Posterior cingulate gyrus (tissue), 11 donors: ENCODE measurements at regions of chr1 and their contacts with region 1.

Region 1: GRCh38 chr1:92886886-92887419 is 55.1 kb downstream of the RPL5 start:
- DNase-seq: no peak

Region 2: DNA sequence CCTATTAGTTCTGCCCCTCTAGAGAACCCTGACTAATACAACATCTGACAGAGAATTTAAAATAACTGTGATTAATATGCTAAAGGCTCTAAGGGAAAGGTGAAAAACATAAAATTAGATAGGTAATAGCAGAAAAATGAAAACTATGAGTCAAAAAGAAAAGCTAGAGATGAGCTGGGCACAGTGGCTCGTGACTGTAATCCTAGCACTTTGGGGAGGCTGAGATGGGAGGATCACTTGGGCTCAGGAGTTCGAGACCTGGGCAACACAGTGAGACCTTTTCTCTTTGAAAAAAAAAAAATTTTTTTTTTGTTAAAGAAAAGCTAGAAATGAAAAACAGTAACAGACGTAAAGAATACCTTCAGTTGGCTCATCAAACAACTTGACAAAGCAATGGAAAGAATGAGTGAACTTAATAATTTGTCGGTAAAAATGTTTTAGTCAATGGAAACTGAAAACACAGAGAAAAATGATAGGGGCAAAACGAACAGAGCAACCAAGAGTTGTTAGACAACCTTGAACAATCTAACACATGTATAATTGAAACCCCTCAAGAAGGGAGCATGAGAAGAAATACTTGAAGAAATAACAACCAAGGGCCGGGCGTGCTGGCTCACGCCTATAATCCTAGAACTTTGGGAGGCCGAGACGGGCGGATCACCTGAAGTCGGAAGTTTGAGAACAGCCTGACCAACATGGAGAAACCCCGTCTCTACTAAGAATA is 267.3 kb before region 1 on chr1:
- intact Hi-C with region 1: no loop called
- DNase-seq: peak in 1 of 10 donors; percentile 62

Region 3: DNA sequence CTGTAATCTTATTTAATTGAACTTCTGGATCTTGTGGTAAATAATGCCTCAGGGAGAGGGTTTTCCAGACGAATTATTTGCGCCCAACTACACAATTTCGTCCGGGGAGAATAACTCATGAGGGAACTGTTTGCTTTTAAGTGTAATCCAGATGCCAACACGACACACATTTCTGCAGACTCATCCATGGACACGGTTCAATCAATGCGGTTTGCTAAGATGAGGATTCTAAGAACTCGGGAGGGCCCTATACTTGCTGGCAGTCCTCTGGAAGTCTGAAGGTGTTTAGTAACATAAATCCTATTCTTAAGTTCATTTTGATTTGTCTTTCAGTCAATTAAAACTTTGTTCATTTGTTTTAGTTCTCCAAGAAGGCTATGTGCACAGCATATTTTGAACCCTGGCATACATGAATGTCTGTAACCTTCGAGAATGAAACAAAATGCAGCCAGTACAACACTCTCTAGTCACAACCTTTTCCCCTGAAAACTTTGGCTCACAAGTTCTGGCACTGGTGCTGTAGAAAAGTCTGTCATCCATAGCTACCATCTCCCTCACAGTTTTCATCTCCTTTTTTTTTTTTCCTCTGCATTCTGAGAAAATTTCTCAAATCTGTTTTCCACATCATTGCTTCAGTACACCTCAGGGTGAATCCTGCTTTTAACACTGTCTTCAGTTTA is 35.5 kb after region 1 on chr1:
- intact Hi-C with region 1: loop called (anchors 5 kb)
- DNase-seq: no peak

Region 4: DNA sequence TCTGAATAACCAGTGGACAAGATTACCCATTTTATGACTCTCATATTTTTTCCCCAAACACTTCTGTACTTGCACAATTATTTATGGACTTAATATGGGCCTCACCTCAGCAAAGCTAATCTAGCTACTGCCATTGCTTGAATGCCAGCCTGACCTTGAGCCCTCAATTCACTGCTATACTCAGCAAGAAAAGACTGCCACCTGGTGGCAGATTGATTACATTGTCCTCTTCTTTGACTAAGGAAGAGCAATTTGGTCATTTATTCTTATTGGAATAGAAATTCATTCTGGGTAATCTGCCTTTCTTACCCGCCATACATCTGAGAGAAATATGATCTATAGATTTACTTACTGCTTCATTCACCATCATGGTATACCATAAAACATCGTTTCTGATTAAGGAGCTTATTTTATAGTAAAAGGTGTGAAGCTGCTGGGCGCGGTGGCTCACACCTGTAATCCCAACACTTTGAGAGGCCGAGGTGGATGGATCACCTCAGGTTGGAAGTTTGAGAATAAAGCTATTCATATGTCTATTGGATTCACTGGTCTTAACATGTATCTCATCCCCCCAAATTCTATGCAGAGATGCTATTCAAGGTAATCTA is 107.3 kb after region 1 on chr1:
- intact Hi-C with region 1: no loop called
- DNase-seq: peak in 5 of 10 donors; percentile 37 to 74 (median 56)

Region 5: DNA sequence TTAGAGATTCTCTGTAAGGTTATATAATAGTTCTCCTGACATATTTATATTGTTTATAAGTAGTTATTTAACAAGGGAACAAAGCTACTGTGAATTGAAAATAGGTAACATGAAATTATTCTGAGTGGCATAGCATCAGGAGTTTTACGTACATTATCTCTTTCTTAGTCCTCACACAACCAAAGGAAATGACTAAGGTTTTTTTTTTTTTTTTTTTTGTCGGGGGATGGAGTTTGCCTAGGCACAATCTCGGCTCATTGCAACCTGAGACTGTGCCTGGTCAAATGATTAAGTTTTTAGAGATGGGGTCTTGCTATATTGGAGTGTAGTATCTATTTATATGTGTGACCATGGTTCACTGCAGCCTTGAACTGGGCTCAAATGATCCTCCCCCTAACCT is 268.4 kb after region 1 on chr1:
- intact Hi-C with region 1: no loop called
- DNase-seq: no peak